ENCODE measurements at regions of chr7 and their contacts with region 1.

Region 1: DNA sequence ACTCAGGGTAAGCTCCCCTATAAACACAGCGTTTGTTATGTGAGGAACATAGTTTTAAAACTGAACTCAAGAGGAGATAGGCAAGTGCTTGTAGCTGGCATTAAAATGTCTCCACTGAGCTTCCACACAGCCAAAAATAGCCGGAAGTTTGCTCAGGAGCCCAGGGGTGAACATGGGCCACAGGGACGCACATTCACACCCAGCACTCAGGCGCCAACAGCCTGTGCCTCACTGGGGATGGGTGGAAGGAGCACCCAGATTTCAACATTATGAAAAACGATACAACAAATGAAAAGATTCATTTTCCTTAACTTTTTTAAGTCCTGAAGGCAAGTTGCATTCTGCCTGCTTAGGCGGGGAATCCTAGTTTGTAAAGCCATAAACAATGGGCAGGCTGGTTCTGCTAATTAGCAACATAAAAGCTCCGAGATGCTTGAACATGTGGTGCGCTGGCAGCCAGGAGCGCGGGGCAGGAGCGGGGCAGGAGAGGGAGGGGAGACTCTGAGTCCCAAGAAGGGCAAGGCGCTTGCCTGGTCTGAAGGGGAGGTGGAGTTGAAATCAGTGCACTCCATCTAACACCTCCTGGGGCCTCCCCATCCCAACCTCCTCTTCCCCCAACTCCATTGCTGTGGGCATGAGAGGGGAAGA is 235.9 kb downstream of the COBL start:
- DNase-seq: peak in 1 of 3 donors; percentile 58
- ATAC-seq: peak; percentile 42 to 54
- H3K4me3 ChIP-seq: no peak overlapping the region
- H3K27ac ChIP-seq: peak overlapping the region; percentile 79
- H3K4me1 ChIP-seq: peaks cover 13% of the 10 kb centered on the region
- H3K27me3 ChIP-seq: no peaks in the 10 kb centered on the region

Region 2: DNA sequence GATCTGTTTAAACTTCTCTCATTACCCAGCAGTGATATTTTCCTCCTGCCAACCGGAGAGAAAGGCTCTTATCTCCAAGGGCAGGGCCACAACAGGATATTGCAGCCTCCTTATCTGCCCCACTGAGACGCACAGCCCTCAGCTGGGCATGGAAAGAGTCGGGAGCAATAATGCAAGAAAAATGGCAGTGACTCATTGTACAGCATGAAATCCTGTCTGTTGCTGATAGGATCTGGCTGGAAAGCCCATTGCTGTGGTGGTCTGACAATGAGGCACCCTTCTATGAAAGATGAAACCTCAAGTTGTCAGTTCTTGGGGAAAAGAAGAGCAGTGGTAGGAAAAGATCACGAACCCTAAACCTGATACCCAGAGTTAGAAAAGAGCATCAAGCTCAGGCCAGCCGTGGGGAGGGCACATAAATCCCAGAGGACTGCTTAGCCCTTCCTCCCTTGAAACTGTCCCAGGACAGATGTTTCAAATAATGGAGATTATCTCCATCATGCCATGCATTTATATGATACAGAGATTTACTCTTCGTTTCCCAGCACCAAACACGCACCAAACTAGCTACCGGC is 583.6 kb before region 1 on chr7:
- intact Hi-C with region 1: no loop called
- DNase-seq: no peak
- ATAC-seq: peak; percentile 82 to 88
- H3K4me3 ChIP-seq: no peak overlapping the region
- H3K27ac ChIP-seq: no peak overlapping the region
- H3K4me1 ChIP-seq: peaks cover 5% of the 10 kb centered on the region
- H3K27me3 ChIP-seq: no peaks in the 10 kb centered on the region

Region 3: DNA sequence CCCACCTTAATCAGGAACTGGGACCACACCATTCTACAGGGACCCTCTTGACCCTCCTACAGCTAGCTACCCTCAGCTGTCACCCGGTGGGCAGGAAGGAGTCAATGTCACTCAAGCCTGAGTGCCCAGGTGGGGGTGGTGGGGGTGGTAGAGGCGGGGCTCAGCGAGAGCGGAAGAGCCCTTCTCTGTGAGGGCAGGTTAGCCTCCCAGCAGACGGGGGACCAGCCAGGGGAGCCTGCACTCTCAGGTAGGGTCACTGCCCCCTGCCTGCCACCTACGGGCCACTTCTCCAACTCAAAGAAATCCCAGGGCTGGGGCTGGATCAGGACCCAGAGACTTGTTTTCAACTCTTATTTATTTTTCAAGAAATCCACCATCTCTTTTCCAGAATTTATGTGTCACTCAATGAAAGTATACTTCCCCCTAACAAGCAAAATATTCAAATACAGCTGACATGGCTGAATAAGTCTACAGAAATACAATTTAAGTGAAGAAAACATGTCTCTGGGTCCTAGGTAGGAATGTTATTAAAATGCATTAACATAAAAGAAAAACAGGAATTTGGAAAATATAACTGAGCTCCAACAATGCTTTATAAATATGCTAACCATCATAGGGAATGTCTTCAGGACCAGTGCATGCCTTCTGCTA is 452.2 kb before region 1 on chr7:
- intact Hi-C with region 1: loop called in 1 of 4 experiments (anchors 10 kb)
- DNase-seq: no peak
- ATAC-seq: no peak
- H3K4me3 ChIP-seq: no peak overlapping the region
- H3K27ac ChIP-seq: peak overlapping the region; percentile 43
- H3K4me1 ChIP-seq: peaks cover 25% of the 10 kb centered on the region
- H3K27me3 ChIP-seq: no peaks in the 10 kb centered on the region

Region 4: DNA sequence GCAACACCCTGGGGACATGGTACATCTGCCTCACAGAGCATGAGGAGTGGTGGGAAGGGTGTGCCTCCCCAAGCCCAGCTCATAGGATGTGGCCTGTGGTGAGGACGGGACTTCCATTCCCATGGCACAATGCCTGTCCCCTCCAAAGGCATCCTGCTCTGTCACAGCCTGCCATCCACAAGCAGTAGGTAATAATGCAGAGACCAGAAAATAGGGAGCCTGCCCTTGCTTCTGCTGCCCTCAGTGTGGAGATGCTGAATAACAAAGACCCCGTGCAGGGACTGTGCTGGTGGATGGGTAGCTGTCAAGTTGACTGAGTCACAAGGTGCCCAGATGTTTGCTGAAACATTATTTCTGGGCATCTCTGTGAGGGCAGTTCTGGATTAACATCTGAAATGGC is 98.1 kb before region 1 on chr7:
- intact Hi-C with region 1: no loop called
- DNase-seq: no peak
- ATAC-seq: peak in 1 of 2 donors; percentile 45
- H3K4me3 ChIP-seq: no peak overlapping the region
- H3K27ac ChIP-seq: no peak overlapping the region
- H3K4me1 ChIP-seq: no peaks in the 10 kb centered on the region
- H3K27me3 ChIP-seq: no peaks in the 10 kb centered on the region

Region 5: DNA sequence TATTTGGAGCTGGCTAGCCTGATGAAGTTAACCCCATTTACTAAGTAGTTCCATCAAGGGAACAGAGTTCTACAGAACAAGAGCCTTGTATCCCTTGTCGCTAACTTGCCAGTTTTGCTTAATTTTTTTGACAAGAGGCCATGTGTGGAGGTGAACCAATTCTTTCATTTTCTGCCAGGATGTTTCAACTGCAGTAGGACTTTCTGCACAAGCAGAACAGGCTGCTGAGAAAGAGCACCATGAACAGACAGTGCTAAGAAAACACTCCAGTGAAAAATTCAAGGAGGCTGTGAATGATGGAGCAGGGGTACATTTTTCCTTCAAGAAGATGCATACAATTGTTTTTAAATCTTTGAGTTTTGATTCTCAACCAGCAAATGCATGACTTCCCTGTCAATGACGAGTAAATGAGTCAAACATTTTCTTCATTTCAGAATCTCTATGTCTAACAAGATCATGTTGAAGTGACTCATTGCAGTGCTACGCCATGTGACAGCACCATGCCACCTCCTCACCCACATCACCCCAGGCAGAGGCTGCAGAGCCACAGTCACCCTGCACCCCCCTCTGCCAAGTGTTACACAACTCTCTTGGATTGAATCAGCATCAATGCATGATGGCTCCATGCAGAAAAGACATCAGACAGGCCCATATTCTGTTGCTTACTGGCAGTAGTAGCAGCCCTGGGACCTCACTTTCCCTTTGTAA is 42.7 kb after region 1 on chr7:
- intact Hi-C with region 1: loop called in 2 of 4 experiments (anchors 5 kb)
- DNase-seq: peak in 1 of 3 donors; percentile 36
- ATAC-seq: peak; percentile 47 to 75
- H3K4me3 ChIP-seq: no peak overlapping the region
- H3K27ac ChIP-seq: peak overlapping the region; percentile 6
- H3K4me1 ChIP-seq: peaks cover 2% of the 10 kb centered on the region
- H3K27me3 ChIP-seq: no peaks in the 10 kb centered on the region

Region 6: DNA sequence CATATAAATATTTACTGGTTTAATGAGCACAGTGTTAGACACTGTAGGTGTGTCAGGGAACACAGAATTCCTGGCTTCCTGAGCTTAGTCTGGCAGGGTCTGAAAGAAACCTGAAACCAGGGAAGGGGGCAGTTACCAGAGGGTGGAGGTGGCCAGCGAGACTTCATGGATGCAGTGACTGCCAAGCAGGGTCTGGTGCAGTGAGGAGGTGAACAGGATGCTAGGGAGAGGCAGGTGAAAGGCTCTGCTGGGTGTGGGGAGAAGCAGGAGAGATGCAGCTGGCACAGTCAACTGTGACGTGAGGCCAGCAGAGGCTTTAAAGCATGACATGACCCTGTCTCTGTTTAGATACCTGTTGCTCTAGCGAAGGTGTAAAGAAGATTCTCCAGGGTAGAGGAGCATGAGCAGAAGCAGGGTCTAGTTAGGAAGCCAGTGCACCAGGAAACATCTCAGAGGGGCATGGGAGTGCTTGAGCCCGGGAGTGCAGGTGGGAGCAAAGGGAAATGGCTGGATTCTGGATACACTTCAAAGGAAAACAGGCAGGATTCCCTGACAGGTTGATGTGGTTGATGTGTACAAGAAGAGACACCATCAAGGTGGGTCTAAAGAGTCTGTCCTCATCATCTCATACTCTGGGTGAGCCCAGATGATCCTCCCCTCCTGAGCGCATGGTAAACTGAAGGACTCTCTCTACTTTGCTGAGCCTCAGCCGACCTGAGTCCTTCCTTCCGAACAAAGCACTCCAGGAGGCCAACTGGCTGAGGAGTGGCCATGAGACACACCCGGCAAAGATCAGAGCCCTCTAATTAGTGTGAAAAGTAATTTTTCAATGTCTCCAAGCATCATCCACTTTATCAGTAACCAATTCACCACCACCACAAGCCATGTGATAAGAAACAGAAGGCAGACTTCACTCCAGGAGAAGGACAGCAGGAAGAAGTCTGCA is 49.1 kb after region 1 on chr7:
- intact Hi-C with region 1: loop called in 2 of 4 experiments (anchors 5 kb)
- DNase-seq: no peak
- ATAC-seq: no peak
- H3K4me3 ChIP-seq: no peak overlapping the region
- H3K27ac ChIP-seq: no peak overlapping the region
- H3K4me1 ChIP-seq: peaks cover 4% of the 10 kb centered on the region
- H3K27me3 ChIP-seq: no peaks in the 10 kb centered on the region